ENCODE measurements at regions of chr11 and their contacts with region 1.

Region 1: DNA sequence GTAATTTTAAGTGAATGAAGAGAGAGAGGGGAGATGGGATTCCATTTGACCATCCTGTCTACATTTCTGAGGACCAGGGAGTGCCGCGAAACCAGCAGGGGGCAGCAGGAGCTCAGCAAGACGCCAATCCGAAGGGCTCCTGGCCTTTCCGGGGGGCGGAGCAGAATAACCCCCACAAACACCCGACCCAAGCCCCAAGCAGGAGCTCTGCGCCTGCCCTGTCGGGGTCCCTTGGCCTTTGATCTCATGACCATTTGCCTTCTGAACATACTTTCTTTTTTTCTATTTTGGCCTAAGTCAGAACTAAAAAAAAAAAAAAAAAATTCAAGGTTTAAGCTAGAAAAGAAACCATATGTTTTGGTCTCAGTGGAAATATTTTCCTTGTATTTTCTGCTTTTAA is 21.9 kb upstream of the SCN2B start:
- DNase-seq: peak; percentile 53
- H3K4me3 Mint-ChIP-seq: no peak overlapping the region
- H3K27ac Mint-ChIP-seq: no peak overlapping the region
- H3K4me1 Mint-ChIP-seq: peaks cover 9% of the 10 kb centered on the region
- H3K27me3 Mint-ChIP-seq: no peaks in the 10 kb centered on the region
- CTCF ChIP-seq: peak; percentile 88

Region 2: GRCh38 chr11:117232092-117232878 is 966.1 kb before region 1 on chr11 and contains the start of gene RNF214:
- CTCF ChIA-PET with region 1: no interaction called
- POLR2A ChIA-PET with region 1: no interaction called
- intact Hi-C with region 1: no loop called
- DNase-seq: peak; percentile 68
- H3K4me3 Mint-ChIP-seq: peak within 1 kb of the TSS; percentile 94
- H3K27ac Mint-ChIP-seq: peak within 1 kb of the TSS; percentile 90
- H3K4me1 Mint-ChIP-seq: peaks cover 26% of the 10 kb centered on the region
- H3K27me3 Mint-ChIP-seq: no peaks in the 10 kb centered on the region
- CTCF ChIP-seq: peak; percentile 94
- total RNA-seq, gene RNF214: 23.3 TPM in 2 replicates

Region 3: GRCh38 chr11:118060869-118061268 is 137.5 kb before region 1 on chr11:
- CTCF ChIA-PET with region 1: no interaction called
- POLR2A ChIA-PET with region 1: no interaction called
- intact Hi-C with region 1: no loop called
- DNase-seq: no peak
- H3K4me3 Mint-ChIP-seq: no peak overlapping the region
- H3K27ac Mint-ChIP-seq: no peak overlapping the region
- H3K4me1 Mint-ChIP-seq: no peaks in the 10 kb centered on the region
- H3K27me3 Mint-ChIP-seq: peaks cover 31% of the 10 kb centered on the region
- CTCF ChIP-seq: no peak

Region 4: GRCh38 chr11:118117790-118118601 is 80.4 kb before region 1 on chr11:
- CTCF ChIA-PET with region 1: no interaction called
- POLR2A ChIA-PET with region 1: no interaction called
- intact Hi-C with region 1: no loop called
- DNase-seq: no peak
- H3K4me3 Mint-ChIP-seq: no peak overlapping the region
- H3K27ac Mint-ChIP-seq: no peak overlapping the region
- H3K4me1 Mint-ChIP-seq: no peaks in the 10 kb centered on the region
- H3K27me3 Mint-ChIP-seq: peaks cover 40% of the 10 kb centered on the region
- CTCF ChIP-seq: no peak

Region 5: GRCh38 chr11:118171269-118172062 is 26.9 kb before region 1 on chr11:
- CTCF ChIA-PET with region 1: interaction called, 12 read pairs
- POLR2A ChIA-PET with region 1: interaction called, 3 read pairs
- intact Hi-C with region 1: no loop called
- DNase-seq: peak; percentile 67
- H3K4me3 Mint-ChIP-seq: no peak overlapping the region
- H3K27ac Mint-ChIP-seq: no peak overlapping the region
- H3K4me1 Mint-ChIP-seq: peaks cover 8% of the 10 kb centered on the region
- H3K27me3 Mint-ChIP-seq: peaks cover 31% of the 10 kb centered on the region
- CTCF ChIP-seq: peak; percentile 93

Region 6: DNA sequence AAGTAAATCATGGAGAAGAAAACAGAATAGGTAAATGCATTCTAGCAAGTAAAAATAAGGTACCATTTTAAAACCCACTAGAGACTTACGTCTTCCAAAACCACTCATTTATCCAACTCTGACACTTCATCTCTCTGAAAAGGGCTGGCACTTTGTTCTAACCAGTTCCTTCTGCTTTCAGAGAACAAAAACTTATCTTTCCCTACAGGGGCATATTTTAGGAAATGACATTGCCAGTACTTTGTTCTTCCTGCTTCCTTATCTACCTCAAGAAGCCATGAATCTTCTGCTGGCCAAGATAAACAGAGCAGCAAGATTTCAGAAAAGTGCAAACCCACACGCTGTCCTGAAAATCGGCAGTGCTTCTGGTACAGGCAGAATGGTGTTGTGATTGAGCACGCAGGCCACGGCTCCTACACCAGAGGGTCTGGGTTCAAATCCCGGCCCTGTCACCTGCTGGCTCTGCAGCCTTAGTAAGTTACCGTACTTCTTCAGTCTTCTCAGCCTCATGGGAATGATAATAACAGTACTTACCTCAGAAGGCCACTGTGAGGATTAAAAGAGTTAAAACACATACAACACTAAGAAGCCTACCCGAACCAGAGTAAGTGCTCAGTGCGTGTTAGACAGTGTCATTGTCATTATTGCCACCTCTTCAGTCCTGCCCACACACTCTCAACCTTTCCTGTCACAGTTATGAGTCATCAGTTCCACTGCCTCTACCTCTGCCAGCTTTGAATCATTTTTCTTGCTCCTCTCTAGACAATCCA is 42.8 kb after region 1 on chr11:
- CTCF ChIA-PET with region 1: interaction called, 18 read pairs
- POLR2A ChIA-PET with region 1: interaction called, 5 read pairs
- intact Hi-C with region 1: no loop called
- DNase-seq: peak; percentile 57
- H3K4me3 Mint-ChIP-seq: peak overlapping the region; percentile 35
- H3K27ac Mint-ChIP-seq: peak overlapping the region; percentile 70
- H3K4me1 Mint-ChIP-seq: peaks cover 25% of the 10 kb centered on the region
- H3K27me3 Mint-ChIP-seq: no peaks in the 10 kb centered on the region
- CTCF ChIP-seq: no peak

Region 7: GRCh38 chr11:118277306-118277705 is 78.9 kb after region 1 on chr11:
- CTCF ChIA-PET with region 1: interaction called, 21 read pairs
- POLR2A ChIA-PET with region 1: interaction called, 3 read pairs
- intact Hi-C with region 1: no loop called
- DNase-seq: peak; percentile 67
- H3K4me3 Mint-ChIP-seq: no peak overlapping the region
- H3K27ac Mint-ChIP-seq: no peak overlapping the region
- H3K4me1 Mint-ChIP-seq: peaks cover 26% of the 10 kb centered on the region
- H3K27me3 Mint-ChIP-seq: no peaks in the 10 kb centered on the region
- CTCF ChIP-seq: no peak

Region 8: GRCh38 chr11:118295834-118296454 is 97.6 kb after region 1 on chr11:
- CTCF ChIA-PET with region 1: interaction called, 58 read pairs
- POLR2A ChIA-PET with region 1: interaction called, 8 read pairs
- intact Hi-C with region 1: loop called (anchors 1 kb)
- DNase-seq: peak; percentile 68
- H3K4me3 Mint-ChIP-seq: no peak overlapping the region
- H3K27ac Mint-ChIP-seq: no peak overlapping the region
- H3K4me1 Mint-ChIP-seq: peaks cover 12% of the 10 kb centered on the region
- H3K27me3 Mint-ChIP-seq: no peaks in the 10 kb centered on the region
- CTCF ChIP-seq: peak; percentile 36

Region 9: DNA sequence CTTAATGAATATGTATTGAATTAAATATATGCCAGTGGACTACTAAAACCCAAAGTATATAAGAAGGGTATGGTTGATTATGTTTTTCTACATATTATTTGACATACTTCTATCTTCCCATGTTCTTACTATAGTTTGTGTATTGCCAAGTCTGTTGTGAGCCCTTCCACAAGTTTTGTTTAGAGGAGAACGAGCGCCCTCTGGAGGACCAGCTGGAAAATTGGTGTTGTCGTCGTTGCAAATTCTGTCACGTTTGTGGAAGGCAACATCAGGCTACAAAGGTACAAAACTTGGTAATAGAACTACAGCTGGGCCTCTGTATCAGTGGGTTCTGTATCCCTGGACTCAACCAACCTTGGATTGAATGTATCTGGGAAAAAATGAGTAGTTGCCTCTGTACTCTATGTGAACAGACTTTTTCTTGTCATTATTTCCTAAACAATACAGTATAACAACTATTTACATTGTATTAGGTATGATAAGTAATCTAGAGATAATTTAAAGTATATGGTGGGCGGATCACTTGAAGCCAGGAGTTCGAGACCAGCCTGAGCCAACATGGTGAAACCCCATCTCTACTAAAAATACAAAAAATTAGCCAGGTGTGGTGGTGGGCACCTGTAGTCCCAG is 290.2 kb after region 1 on chr11:
- CTCF ChIA-PET with region 1: interaction called, 3 read pairs
- POLR2A ChIA-PET with region 1: no interaction called
- intact Hi-C with region 1: loop called (anchors 1 kb)
- DNase-seq: peak; percentile 78
- H3K4me3 Mint-ChIP-seq: no peak overlapping the region
- H3K27ac Mint-ChIP-seq: no peak overlapping the region
- H3K4me1 Mint-ChIP-seq: no peaks in the 10 kb centered on the region
- H3K27me3 Mint-ChIP-seq: no peaks in the 10 kb centered on the region
- CTCF ChIP-seq: peak; percentile 74

Measured in MCF 10A (cell line).